Left cardiac atrium (tissue), 4 donors: ENCODE measurements at regions of chr11 and their contacts with region 1.

Region 1: GRCh38 chr11:63920939-63921417 is 4.0 kb upstream of the RCOR2 start:
- DNase-seq: no peak
- ATAC-seq: no peak

Region 2: DNA sequence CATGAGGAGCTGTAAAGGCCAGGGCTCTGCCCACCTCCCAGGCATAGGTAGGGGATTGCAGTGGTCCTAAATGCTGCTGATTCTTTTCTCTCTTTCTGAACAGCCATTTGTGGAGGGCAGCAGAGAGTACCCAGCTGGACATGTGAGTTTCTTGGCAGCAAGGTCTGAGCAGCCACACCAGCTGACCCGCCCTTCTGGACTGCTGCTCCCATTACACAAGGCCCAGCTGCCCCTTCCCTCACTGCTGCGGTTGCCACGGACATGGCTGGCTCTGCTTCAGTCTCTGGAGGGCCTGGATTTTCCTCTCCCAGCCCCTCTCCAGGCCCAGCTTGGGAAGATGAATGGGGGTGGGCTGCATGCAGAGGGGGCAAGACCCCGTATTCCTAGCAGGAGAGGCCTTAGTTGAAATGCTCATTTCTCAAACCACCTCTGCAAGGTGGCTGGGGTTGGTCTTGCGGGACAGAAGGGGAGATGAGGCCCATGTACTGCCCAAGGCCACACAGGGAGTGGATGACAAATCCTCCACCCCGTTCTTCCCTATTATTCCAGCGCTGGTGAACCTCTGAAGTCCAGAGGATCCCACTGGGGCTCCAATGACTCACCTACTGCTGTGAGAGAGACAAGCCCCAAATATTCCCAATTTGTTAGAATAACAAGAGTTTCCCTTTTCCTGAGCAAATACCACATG is 410.5 kb before region 1 on chr11:
- intact Hi-C with region 1: loop called in 1 of 2 experiments (anchors 5 kb)
- DNase-seq: peak; percentile 49
- ATAC-seq: peak; percentile 66 to 83

Region 3: GRCh38 chr11:64131683-64132190 is 210.8 kb after region 1 on chr11:
- intact Hi-C with region 1: no loop called
- DNase-seq: no peak
- ATAC-seq: no peak

Region 4: DNA sequence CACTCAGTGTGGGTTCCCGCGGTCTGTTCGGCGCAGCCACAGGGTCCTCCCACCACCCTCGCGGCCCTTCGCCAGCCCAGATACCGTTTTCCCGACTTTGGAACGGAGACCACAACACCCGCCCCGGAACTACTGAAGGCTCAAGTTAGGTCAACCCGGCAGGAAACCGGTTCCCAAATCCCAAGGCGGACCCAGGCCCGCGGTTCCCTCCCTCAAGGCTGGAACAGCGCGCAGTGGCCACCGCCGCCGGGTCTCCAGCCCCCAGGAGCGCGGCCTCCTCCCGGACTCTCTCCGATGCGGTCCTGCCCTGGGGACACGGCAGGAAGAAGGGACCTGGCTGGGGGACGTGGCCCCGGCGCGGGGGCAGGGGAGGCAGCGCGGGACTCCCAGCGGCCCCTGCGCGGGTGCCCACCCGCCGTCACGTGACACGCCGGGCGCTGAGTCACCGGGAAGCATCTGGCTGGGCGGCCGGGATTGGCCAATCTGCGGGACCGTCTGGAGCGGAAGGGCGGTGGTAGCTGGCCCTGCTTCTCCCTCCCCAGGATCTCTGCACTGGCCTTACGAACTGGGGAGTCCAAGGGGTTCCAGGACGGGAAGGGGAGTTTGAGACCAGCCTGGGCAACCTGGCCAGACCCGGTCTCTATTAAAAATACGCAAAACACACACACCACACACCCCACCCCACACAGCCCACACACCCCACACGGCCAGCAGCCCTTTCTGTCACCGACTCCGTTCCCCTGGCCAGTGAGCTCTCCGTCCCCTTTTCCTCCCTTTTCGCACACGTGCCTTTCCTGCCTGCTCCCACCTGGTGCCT is 1556.4 kb after region 1 on chr11:
- intact Hi-C with region 1: no loop called
- DNase-seq: peak; percentile 98
- ATAC-seq: peak; percentile 89 to 93